Naive thymus-derived CD8-positive, alpha-beta T cell (primary cell): ENCODE measurements at regions of chr7 and their contacts with region 1.

Region 1: DNA sequence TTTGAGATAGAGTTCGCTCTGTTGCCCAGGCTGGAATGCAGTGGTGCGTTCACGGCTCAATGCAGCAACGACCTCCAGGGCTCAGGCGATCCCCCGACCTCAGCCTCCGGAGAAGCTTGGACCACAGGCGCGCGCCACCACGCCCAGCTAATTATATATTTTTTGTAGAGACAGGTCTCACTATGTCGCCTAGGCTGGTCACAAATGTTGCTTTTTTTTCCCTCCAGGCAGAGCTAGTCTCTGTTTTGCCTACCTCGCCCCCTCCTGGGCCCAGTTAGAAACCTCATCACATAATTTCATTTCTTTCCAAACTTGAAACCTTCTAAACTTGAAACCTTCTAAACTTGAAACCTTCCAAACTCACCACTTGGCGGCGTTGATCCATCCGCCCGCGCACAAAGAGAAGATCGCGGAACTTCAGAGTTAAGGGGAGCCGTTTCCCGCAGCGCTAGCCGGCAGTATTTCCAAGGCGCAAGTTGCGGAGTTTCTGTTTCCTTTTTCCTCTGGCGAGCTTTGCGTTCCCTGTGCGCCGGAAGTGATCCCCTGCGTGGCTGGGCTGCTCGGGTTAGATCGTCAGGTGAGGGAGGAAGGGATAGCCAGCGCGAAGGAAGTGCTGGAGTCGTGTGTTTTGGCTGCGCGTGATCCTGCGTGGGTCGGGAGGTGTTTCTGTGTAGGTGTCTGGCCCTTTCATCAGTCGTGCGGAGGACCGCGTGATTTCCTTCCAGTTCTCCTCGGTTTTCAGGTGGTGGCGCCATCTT is at the start of gene SSBP1:
- DNase-seq: peak; percentile 72 to 94 (median 91)
- ATAC-seq: peak; percentile 83 to 88
- H3K4me3 Mint-ChIP-seq: peak within 1 kb of the TSS; percentile 95 to 99 (median 98)
- H3K27ac Mint-ChIP-seq: peak within 1 kb of the TSS; percentile 98 to 99 (median 98)
- H3K4me1 Mint-ChIP-seq: peaks cover 19 to 53% (median 48%) of the 10 kb centered on the region in 4 donors
- H3K27me3 Mint-ChIP-seq: no peaks in the 10 kb centered on the region
- polyA plus RNA-seq, gene SSBP1: 341 to 350 (median 349) TPM

Region 2: DNA sequence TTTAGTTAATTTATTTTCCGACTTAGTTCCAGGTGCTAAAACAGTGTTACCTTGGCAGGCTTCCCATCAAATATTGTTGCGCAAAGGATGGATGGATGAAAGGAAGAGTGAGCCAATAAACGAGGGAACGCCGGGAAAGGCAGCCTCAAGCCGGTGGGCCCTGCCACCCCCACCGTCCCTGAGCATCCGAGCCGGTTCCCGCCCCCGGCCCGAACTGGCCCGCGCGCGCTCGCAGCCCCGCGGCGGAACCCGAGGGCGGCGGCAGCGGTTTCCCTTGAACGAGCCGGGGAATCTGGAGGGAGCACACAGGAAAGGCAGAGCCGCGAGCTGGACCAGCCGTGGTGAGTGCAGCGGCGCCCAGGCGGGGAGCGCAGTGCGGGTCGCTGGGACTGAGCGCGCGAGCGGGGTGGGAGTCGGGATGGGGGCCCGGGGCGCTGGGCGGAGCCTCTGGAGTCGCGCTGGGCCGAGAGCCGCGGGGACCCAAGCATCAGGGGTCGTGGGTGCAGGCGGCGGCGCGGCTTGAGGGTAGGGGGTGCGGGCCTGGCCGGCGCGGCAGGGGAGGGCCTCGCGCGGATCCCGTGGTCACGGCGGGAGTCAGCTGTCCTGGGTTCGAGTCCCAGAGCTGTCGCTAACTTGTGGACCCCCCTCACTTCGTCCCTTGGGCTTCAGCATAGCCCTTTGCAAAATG is 186.8 kb before region 1 on chr7 and contains the start of gene AGK:
- POLR2A ChIA-PET with region 1: interaction called, 17 read pairs
- DNase-seq: peak; percentile 49 to 79 (median 69)
- ATAC-seq: peak; percentile 97 to 98
- H3K4me3 Mint-ChIP-seq: peak within 1 kb of the TSS; percentile 79 to 96 (median 94)
- H3K27ac Mint-ChIP-seq: peak within 1 kb of the TSS; percentile 81 to 94 (median 91)
- H3K4me1 Mint-ChIP-seq: peaks cover 25 to 36% (median 33%) of the 10 kb centered on the region in 4 donors
- H3K27me3 Mint-ChIP-seq: no peaks in the 10 kb centered on the region
- polyA plus RNA-seq, gene AGK: 23.3 to 29.3 (median 25.6) TPM

Region 3: DNA sequence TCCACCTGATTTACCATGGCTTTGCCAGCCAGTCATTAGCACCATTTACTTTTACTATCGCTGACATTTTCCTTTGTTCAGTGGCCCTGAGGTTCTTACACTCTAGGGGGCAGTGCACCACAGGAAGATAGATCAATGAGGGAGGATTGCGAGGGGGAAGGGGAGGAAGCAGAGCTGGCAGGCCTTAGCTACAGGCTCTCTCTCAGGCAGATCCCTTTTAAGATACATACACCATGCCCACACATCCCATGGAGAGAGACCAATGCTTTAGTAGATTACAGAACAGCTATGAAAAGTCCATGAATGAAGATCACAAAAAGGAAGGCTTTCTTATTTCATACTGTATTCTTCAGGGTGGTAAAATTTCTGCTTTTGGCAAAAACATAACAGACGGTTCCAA is 83.5 kb before region 1 on chr7:
- POLR2A ChIA-PET with region 1: interaction called, 16 read pairs
- DNase-seq: peak; percentile 22 to 83 (median 62)
- ATAC-seq: peak; percentile 97
- H3K4me3 Mint-ChIP-seq: no peak overlapping the region
- H3K27ac Mint-ChIP-seq: peak overlapping the region in 9 of 10 donors; percentile 44 to 83 (median 71)
- H3K4me1 Mint-ChIP-seq: peaks cover 4 to 8% (median 6%) of the 10 kb centered on the region in 4 donors
- H3K27me3 Mint-ChIP-seq: no peaks in the 10 kb centered on the region

Region 4: GRCh38 chr7:141701489-141702046 is 36.4 kb before region 1 on chr7:
- POLR2A ChIA-PET with region 1: interaction called, 75 read pairs
- DNase-seq: peak; percentile 59 to 88 (median 81)
- ATAC-seq: peak; percentile 86 to 89
- H3K4me3 Mint-ChIP-seq: peak overlapping the region; percentile 83 to 95 (median 89)
- H3K27ac Mint-ChIP-seq: peak overlapping the region; percentile 87 to 97 (median 94)
- H3K4me1 Mint-ChIP-seq: peaks cover 40 to 53% (median 50%) of the 10 kb centered on the region in 4 donors
- H3K27me3 Mint-ChIP-seq: peaks cover 0 to 3% (median 0%) of the 10 kb centered on the region in 5 donors